Calu3 (cell line): ENCODE measurements at regions of chr16 and their contacts with region 1.

Region 1: DNA sequence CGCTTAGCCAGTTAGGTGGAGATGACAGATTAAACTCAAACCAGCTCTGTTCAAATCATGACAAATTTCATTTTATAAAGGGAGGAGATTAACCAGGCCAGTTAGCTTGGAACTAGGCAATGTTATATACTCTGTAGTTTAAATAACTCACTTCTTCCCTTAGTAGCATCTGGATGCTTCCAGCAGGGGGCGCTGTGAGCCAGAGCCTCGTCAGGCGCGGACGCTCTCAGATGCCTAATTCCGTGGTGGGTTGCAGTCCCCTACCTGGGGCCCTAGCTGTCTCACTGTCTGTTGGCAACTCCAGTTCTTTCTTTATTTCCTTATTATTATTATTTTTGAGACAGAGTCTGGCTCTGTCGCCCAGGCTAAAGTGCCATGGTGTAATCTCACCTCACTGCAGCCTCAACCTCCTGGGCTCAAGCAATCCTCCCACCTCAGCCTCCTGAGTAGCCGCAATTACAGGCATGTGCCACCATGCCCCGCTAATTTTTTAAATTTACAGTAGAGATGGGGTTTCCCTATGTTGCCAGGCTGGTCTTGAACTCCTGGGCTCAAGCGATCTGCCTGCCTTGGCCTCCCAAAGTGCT is 17.3 kb upstream of the WFDC1 start:
- DNase-seq: peak; percentile 82
- H3K4me3 Mint-ChIP-seq: no peak overlapping the region
- H3K27ac Mint-ChIP-seq: no peak overlapping the region
- H3K4me1 Mint-ChIP-seq: no peaks in the 10 kb centered on the region
- H3K27me3 Mint-ChIP-seq: peaks cover 37% of the 10 kb centered on the region
- CTCF ChIP-seq: peak; percentile 89

Region 2: GRCh38 chr16:84308120-84308519 is 30.8 kb after region 1 on chr16:
- CTCF ChIA-PET with region 1: interaction called, 23 read pairs
- intact Hi-C with region 1: loop called (anchors 1 kb)
- DNase-seq: peak; percentile 78
- H3K4me3 Mint-ChIP-seq: no peak overlapping the region
- H3K27ac Mint-ChIP-seq: no peak overlapping the region
- H3K4me1 Mint-ChIP-seq: no peaks in the 10 kb centered on the region
- H3K27me3 Mint-ChIP-seq: peaks cover 61% of the 10 kb centered on the region
- CTCF ChIP-seq: peak; percentile 61

Region 3: GRCh38 chr16:84484579-84485254 is 207.4 kb after region 1 on chr16:
- CTCF ChIA-PET with region 1: no interaction called
- intact Hi-C with region 1: loop called (anchors 1 kb)
- DNase-seq: peak; percentile 60
- H3K4me3 Mint-ChIP-seq: no peak overlapping the region
- H3K27ac Mint-ChIP-seq: no peak overlapping the region
- H3K4me1 Mint-ChIP-seq: no peaks in the 10 kb centered on the region
- H3K27me3 Mint-ChIP-seq: no peaks in the 10 kb centered on the region
- CTCF ChIP-seq: peak; percentile 79

Region 4: GRCh38 chr16:84544031-84544773 is 266.9 kb after region 1 on chr16:
- CTCF ChIA-PET with region 1: no interaction called
- intact Hi-C with region 1: no loop called
- DNase-seq: no peak
- H3K4me3 Mint-ChIP-seq: no peak overlapping the region
- H3K27ac Mint-ChIP-seq: no peak overlapping the region
- H3K4me1 Mint-ChIP-seq: no peaks in the 10 kb centered on the region
- H3K27me3 Mint-ChIP-seq: no peaks in the 10 kb centered on the region
- CTCF ChIP-seq: no peak